OCI-LY7 (cell line): ENCODE measurements at regions of chr12 and their contacts with region 1.

Region 1: DNA sequence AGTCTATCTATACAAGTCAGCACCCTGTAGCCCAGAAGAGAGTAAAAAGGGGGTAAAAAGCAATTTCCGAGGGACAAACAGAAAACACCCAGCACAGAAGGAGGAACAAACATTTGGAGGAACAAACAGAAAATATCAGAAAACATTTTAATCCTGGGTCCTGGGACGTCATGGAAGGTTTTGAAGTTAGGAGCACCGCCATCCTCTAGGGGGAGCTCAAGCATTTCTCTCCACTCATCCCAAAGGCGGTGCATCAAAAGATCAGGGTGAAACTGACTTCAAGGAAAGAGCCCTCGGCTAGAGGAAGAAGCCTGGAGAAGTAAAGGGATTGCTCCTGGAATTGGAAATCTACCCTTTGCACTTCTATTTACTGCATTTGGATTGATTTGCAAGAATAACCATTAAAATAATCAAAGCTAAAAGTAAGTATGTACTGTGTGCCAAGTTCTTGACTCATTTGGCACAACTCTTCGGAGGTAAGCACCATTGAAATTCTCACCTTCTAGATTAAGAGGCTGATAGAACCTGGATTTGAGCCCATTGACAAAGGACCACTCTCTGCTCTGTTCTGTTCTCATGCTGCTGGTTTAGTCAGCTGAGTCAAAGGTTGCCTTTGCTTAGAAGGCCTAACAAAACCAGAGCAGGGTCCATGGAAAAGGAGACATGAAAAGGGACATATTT is 17.2 kb upstream of the POC1B start:
- DNase-seq: peak; percentile 79
- H3K4me3 ChIP-seq: no peak overlapping the region
- H3K27ac ChIP-seq: no peak overlapping the region
- H3K4me1 ChIP-seq: peaks cover 5% of the 10 kb centered on the region
- CTCF ChIP-seq: peak; percentile 98

Region 2: GRCh38 chr12:89494411-89495231 is 48.4 kb before region 1 on chr12:
- CTCF ChIA-PET with region 1: no interaction called
- POLR2A ChIA-PET with region 1: no interaction called
- intact Hi-C with region 1: no loop called
- DNase-seq: no peak
- H3K4me3 ChIP-seq: no peak overlapping the region
- H3K27ac ChIP-seq: no peak overlapping the region
- H3K4me1 ChIP-seq: no peaks in the 10 kb centered on the region
- CTCF ChIP-seq: no peak

Region 3: GRCh38 chr12:89721291-89721987 is 178.4 kb after region 1 on chr12:
- CTCF ChIA-PET with region 1: no interaction called
- POLR2A ChIA-PET with region 1: no interaction called
- intact Hi-C with region 1: no loop called
- DNase-seq: peak; percentile 25
- H3K4me3 ChIP-seq: peak overlapping the region; percentile 35
- H3K27ac ChIP-seq: no peak overlapping the region
- H3K4me1 ChIP-seq: peaks cover 13% of the 10 kb centered on the region
- CTCF ChIP-seq: no peak

Region 4: GRCh38 chr12:89862511-89863179 is 319.6 kb after region 1 on chr12:
- CTCF ChIA-PET with region 1: no interaction called
- POLR2A ChIA-PET with region 1: no interaction called
- intact Hi-C with region 1: loop called (anchors 5 kb)
- DNase-seq: peak; percentile 91
- H3K4me3 ChIP-seq: peak overlapping the region; percentile 49
- H3K27ac ChIP-seq: peak overlapping the region; percentile 78
- H3K4me1 ChIP-seq: peaks cover 63% of the 10 kb centered on the region
- CTCF ChIP-seq: no peak

Region 5: GRCh38 chr12:90102957-90103652 is 560.1 kb after region 1 on chr12:
- CTCF ChIA-PET with region 1: no interaction called
- POLR2A ChIA-PET with region 1: interaction called, 4 read pairs
- intact Hi-C with region 1: loop called (anchors 2 kb)
- DNase-seq: peak; percentile 69
- H3K4me3 ChIP-seq: no peak overlapping the region
- H3K27ac ChIP-seq: no peak overlapping the region
- H3K4me1 ChIP-seq: peaks cover 11% of the 10 kb centered on the region
- CTCF ChIP-seq: peak; percentile 91

Region 6: DNA sequence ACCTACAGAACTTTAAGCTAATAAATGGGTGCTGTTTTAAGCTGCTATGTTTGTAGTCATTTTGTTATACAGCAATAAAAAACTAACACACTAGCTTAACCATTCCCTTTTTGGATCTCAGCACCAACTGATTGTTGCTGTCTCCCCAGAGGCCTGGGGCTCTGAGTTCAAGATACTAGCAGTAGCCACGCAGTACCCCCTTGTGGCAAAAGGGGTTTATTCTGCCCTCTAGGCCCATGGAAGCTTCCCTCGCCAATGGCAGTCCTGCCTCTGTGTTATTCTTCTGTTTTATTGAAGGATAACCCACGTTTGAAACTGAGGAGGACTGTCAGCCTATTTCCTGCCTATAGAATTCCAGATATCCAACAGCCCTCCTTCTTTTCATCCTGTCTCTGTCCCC is 620.9 kb after region 1 on chr12:
- CTCF ChIA-PET with region 1: interaction called, 5 read pairs
- POLR2A ChIA-PET with region 1: no interaction called
- intact Hi-C with region 1: loop called (anchors 1 kb)
- DNase-seq: peak; percentile 37
- H3K4me3 ChIP-seq: no peak overlapping the region
- H3K27ac ChIP-seq: no peak overlapping the region
- H3K4me1 ChIP-seq: no peaks in the 10 kb centered on the region
- CTCF ChIP-seq: peak; percentile 66

Region 7: GRCh38 chr12:90253674-90254181 is 710.7 kb after region 1 on chr12:
- CTCF ChIA-PET with region 1: no interaction called
- POLR2A ChIA-PET with region 1: interaction called, 3 read pairs
- intact Hi-C with region 1: loop called (anchors 10 kb)
- DNase-seq: peak; percentile 76
- H3K4me3 ChIP-seq: no peak overlapping the region
- H3K27ac ChIP-seq: no peak overlapping the region
- H3K4me1 ChIP-seq: peaks cover 10% of the 10 kb centered on the region
- CTCF ChIP-seq: peak; percentile 59

Region 8: DNA sequence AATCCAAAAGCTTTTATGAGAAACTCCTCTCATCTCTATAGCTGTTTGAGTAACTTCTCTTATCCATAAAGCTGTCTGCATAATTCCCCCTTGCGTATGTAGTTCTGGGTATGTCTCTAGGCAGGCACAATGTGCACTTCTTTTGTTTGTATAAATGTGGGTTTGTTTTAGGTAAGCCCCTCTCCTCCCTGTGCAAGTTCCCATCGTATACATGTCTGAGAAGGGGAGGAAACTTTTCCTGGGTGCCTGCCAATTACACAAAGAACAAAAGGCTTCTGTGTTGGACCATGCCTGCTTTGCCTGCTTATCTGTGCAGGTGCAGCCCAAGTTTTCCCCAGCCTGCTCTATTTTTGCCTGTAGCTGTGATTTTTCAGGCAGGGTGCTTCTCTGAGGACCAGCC is 1315.2 kb after region 1 on chr12:
- CTCF ChIA-PET with region 1: no interaction called
- POLR2A ChIA-PET with region 1: no interaction called
- intact Hi-C with region 1: loop called (anchors 5 kb)
- DNase-seq: no peak
- H3K4me3 ChIP-seq: no peak overlapping the region
- H3K27ac ChIP-seq: no peak overlapping the region
- H3K4me1 ChIP-seq: no peaks in the 10 kb centered on the region
- CTCF ChIP-seq: no peak